Calu3 (cell line): ENCODE measurements at regions of chr18 and their contacts with region 1.

Region 1: GRCh38 chr18:45730832-45731575 is 7.0 kb downstream of the SLC14A1 start:
- DNase-seq: peak; percentile 24
- H3K4me3 Mint-ChIP-seq: no peak overlapping the region
- H3K27ac Mint-ChIP-seq: no peak overlapping the region
- H3K4me1 Mint-ChIP-seq: peaks cover 28% of the 10 kb centered on the region
- H3K27me3 Mint-ChIP-seq: no peaks in the 10 kb centered on the region
- CTCF ChIP-seq: no peak

Region 2: GRCh38 chr18:45865466-45865865 is 134.5 kb after region 1 on chr18:
- CTCF ChIA-PET with region 1: interaction called, 11 read pairs
- intact Hi-C with region 1: no loop called
- DNase-seq: no peak
- H3K4me3 Mint-ChIP-seq: no peak overlapping the region
- H3K27ac Mint-ChIP-seq: no peak overlapping the region
- H3K4me1 Mint-ChIP-seq: no peaks in the 10 kb centered on the region
- H3K27me3 Mint-ChIP-seq: no peaks in the 10 kb centered on the region
- CTCF ChIP-seq: no peak